Astrocyte of the cerebellum (primary cell): ENCODE measurements at regions of chr1 and their contacts with region 1.

Region 1: GRCh38 chr1:200610846-200611245 is 9.7 kb downstream of the KIF14 start:
- DNase-seq: no peak
- H3K4me3 ChIP-seq: no peak overlapping the region
- CTCF ChIP-seq: no peak

Region 2: DNA sequence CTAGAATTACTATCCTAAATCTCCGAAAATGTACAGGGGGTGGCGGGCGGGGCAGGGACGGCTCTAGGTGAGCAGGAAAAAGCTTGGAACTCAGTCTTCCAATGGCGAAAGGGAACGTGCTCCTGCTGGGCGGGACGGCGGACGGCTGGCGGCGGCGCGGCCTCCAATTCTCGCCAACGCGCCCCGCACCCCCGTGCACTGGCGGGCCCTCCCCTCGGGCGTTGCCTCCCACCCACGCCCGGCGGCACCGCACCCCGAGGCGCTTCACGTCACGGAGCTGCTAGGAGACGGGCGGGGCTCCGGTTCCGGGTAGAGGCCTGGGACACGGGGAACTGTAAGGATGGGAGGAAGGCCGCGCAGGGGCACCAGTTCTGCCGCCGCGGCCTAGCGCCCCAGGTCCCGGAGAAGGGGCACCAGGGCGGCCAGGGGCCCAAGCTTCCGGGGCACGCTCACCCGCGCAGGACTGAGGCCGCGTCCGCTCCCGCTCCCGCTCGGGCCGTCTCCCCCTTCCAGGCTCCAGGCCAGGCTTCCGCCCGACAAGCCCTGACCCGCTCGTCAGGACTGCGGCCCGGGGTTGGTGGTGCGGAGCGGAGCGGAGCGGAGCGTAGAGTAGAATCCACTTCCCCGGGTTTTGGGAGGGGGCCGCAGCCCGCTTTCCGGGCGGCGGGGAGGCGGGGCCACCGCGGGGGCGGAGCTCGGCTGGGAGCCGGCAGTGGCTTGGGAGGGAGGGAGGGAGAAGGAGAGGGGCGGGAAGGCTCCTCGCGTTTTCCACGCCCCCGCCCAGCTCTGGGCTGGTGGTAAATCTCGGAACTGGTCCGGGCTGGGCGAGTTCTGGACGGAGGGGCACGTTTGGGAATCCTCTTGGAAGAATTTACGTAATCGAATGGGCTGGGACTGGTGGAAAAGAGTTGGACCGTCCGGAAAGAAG is 58.7 kb after region 1 on chr1 and contains the start of gene DDX59:
- in situ Hi-C with region 1: loop called (anchors 10 kb)
- DNase-seq: peak; percentile 94
- H3K4me3 ChIP-seq: peak within 1 kb of the TSS; percentile 83
- CTCF ChIP-seq: no peak